ENCODE measurements at regions of chr9 and their contacts with region 1.

Region 1: GRCh38 chr9:129139993-129140396 is 28.8 kb downstream of the PTPA start:
- DNase-seq: peak; percentile 100

Region 2: GRCh38 chr9:129102901-129103594 is 36.9 kb before region 1 on chr9:
- in situ Hi-C with region 1: no loop called
- DNase-seq: peak; percentile 77

Region 3: GRCh38 chr9:129630967-129631672 is 491.1 kb after region 1 on chr9:
- in situ Hi-C with region 1: loop called (anchors 10 kb)
- DNase-seq: no peak

Measured in SK-MEL-5 (cell line).